ENCODE measurements at regions of chr19 and their contacts with region 1.

Region 1: GRCh38 chr19:4968462-4969291 is at the start of gene KDM4B:
- DNase-seq: peak; percentile 99
- ATAC-seq: peak; percentile 96 to 98 (median 98)
- H3K4me3 ChIP-seq: peak within 1 kb of the TSS; percentile 24 to 76 (median 70)
- H3K27ac ChIP-seq: peak within 1 kb of the TSS; percentile 44 to 87 (median 72)
- H3K4me1 ChIP-seq: peaks cover 3 to 47% (median 35%) of the 10 kb centered on the region in 9 donors
- H3K27me3 ChIP-seq: no peaks in the 10 kb centered on the region
- CTCF ChIP-seq: no peak
- total RNA-seq, gene KDM4B: 21.4 to 35.8 (median 30.3) TPM

Region 2: GRCh38 chr19:4867534-4868285 is 101.0 kb before region 1 on chr19 and contains the start of gene PLIN3:
- intact Hi-C with region 1: loop called in 2 of 10 experiments (anchors 5 to 10 kb)
- DNase-seq: peak; percentile 98
- ATAC-seq: peak; percentile 97 to 99 (median 98)
- H3K4me3 ChIP-seq: peak within 1 kb of the TSS; percentile 70 to 99 (median 84)
- H3K27ac ChIP-seq: peak within 1 kb of the TSS in 9 of 10 donors; percentile 67 to 97 (median 87)
- H3K4me1 ChIP-seq: peaks cover 0 to 40% (median 8%) of the 10 kb centered on the region in 9 donors
- H3K27me3 ChIP-seq: no peaks in the 10 kb centered on the region
- CTCF ChIP-seq: no peak
- total RNA-seq, gene PLIN3: 16.3 to 52.9 (median 26.0) TPM

Region 3: DNA sequence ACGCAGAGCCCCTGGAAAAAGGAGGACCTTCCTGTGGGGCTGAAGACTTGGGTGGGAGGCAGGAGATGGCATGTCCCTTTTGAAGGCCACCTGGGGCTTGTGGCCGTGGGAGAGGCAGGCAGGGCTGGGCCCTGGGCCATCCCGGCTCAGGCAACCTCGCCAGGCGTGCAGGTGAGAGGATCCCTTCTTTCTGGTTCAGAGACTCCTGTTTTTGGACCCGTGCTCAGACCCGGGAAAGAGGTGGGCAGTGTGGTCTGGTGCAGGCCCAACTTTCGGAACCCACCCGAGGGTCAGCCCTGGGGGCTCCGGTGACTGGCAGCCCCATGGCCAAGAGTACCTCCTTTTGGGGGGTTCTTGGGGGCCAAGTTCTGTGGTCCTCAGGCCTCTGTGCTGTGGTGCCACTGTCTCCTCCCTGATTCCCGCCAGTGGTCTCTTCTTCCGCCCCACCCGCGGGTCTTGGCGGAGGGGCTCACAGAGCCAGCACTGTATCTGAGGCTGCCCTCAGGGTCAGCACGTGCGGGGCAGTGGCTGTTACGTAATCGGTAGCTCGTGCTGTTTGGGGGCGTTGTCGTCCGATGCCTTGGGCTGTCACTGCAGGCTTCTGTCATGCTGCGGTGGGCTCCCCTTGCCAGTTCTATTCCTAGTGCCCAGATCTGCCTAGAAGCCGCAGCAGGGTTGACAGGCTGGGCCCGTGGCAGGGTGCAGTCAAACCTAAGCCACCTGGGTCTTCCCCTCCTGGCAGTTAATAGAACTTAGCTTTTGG is 43.0 kb after region 1 on chr19:
- intact Hi-C with region 1: loop called in 1 of 10 experiments (anchors 5 kb)
- DNase-seq: no peak
- ATAC-seq: peak in 6 of 8 donors; percentile 29 to 68 (median 47)
- H3K4me3 ChIP-seq: no peak overlapping the region
- H3K27ac ChIP-seq: peak overlapping the region in 2 of 10 donors; percentile 33 to 55
- H3K4me1 ChIP-seq: peaks cover 0 to 44% (median 22%) of the 10 kb centered on the region in 9 donors
- H3K27me3 ChIP-seq: no peaks in the 10 kb centered on the region
- CTCF ChIP-seq: no peak

Region 4: DNA sequence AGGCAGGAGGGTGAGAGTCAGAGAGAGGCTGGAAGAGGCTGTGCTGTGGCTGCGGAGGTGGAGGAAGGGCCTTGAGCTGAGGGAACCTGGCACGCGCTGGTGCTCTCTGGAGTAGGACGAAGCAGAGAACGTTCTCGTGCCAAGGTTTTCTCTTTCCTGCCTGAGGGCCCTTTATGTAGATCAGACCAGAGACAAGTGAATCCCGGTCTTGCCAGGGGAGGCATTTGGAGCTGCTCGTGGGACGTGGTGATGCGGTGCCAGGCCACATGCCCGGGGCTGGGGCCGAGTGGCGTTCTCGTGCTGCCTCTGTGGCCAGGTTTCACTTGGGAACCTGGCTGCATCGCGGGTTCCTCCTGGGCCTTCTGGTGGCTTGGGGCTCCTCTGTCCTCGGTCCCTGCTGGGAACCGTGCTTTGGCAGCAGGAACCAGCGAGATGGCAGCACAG is 54.5 kb after region 1 on chr19:
- intact Hi-C with region 1: loop called in 2 of 10 experiments (anchors 5 to 10 kb)
- DNase-seq: no peak
- ATAC-seq: peak in 7 of 8 donors; percentile 21 to 70 (median 56)
- H3K4me3 ChIP-seq: no peak overlapping the region
- H3K27ac ChIP-seq: peak overlapping the region in 3 of 10 donors; percentile 17 to 48 (median 44)
- H3K4me1 ChIP-seq: peaks cover 5 to 39% (median 24%) of the 10 kb centered on the region in 9 donors
- H3K27me3 ChIP-seq: no peaks in the 10 kb centered on the region
- CTCF ChIP-seq: no peak

Measured in heart right ventricle (tissue), 16 donors.